ENCODE measurements at regions of chr5 and their contacts with region 1.

Region 1: GRCh38 chr5:97355775-97356174 is 172.7 kb upstream of the RIOK2 start:
- DNase-seq: peak; percentile 74
- ATAC-seq: peak; percentile 90
- H3K4me3 ChIP-seq: peak overlapping the region; percentile 68
- H3K27ac ChIP-seq: peak overlapping the region; percentile 68
- H3K4me1 ChIP-seq: peaks cover 11% of the 10 kb centered on the region
- H3K27me3 ChIP-seq: no peaks in the 10 kb centered on the region
- CTCF ChIP-seq: no peak
- EP300 ChIP-seq: 0 out of 4 replicates have a peak, but pooled peaks of 1 of the 2 experiments have one; percentile 4
- POLR2A ChIP-seq: 0 out of 2 replicates have a peak, but pooled peaks have one; percentile 32
- RAD21 ChIP-seq: no peak

Region 2: DNA sequence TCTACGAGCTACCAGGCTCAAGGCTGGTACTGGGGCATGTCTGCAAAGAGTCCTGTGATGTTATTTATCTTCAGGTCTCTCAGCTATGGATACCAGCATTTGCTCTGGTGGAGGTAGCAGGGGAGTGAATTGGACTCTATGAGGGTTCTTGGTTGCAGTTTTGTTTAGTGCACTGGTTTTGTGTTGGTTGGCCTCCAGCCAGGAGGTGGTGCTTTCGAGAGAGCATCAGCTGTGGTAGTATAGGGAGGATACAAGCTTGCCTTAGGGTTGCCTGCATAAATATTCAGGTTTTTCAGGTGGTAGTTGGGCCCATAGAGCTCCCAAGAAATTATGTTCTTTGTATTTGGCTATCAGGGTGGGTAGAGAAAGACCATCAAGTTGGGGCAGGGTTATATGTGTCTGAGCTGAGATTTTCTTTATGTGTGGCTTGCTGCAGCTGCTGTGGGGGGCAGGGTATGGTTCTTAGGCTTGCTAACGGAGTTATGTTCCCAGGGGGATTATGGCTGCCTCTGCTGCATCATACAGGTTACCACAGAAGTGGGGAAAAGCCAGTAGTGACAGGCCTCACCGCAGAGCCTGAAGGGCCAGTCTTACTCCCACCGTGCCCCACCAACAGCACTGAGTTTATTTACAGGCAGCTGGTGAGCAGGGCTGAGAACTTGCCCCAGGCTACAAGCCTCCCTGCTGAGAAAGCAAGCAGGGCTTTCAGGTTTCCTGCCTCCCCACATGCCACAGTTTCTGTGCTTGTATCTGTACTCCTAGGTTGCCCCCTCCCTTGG is 163.0 kb before region 1 on chr5:
- CTCF ChIA-PET with region 1: interaction called, 3 read pairs
- POLR2A ChIA-PET with region 1: no interaction called
- RAD21 ChIA-PET with region 1: no interaction called
- SMC1A ChIA-PET with region 1: no interaction called
- in situ Hi-C with region 1: no loop called
- intact Hi-C with region 1: loop called (anchors 5 kb)
- DNase-seq: peak; percentile 63
- ATAC-seq: peak; percentile 94
- H3K4me3 ChIP-seq: 0 out of 2 replicates have a peak overlapping the region, but pooled peaks have one; percentile 32
- H3K27ac ChIP-seq: peak overlapping the region; percentile 73
- H3K4me1 ChIP-seq: peaks cover 8% of the 10 kb centered on the region
- H3K27me3 ChIP-seq: no peaks in the 10 kb centered on the region
- CTCF ChIP-seq: no peak
- EP300 ChIP-seq: peak; percentile 28 to 49; a peak in 1 of 4 replicates
- POLR2A ChIP-seq: no peak
- RAD21 ChIP-seq: no peak

Region 3: GRCh38 chr5:97547999-97548738 is 192.4 kb after region 1 on chr5:
- CTCF ChIA-PET with region 1: no interaction called
- POLR2A ChIA-PET with region 1: no interaction called
- RAD21 ChIA-PET with region 1: no interaction called
- SMC1A ChIA-PET with region 1: interaction called, 3 read pairs
- in situ Hi-C with region 1: no loop called
- intact Hi-C with region 1: loop called (anchors 5 kb)
- DNase-seq: peak; percentile 42
- ATAC-seq: peak; percentile 85
- H3K4me3 ChIP-seq: no peak overlapping the region
- H3K27ac ChIP-seq: peak overlapping the region; percentile 45; the same call in 1 of the 2 replicates
- H3K4me1 ChIP-seq: peaks cover 11% of the 10 kb centered on the region
- H3K27me3 ChIP-seq: no peaks in the 10 kb centered on the region
- CTCF ChIP-seq: no peak
- EP300 ChIP-seq: peak; percentile 23 to 68; a peak in 2 of 4 replicates
- POLR2A ChIP-seq: no peak
- RAD21 ChIP-seq: no peak

Region 4: DNA sequence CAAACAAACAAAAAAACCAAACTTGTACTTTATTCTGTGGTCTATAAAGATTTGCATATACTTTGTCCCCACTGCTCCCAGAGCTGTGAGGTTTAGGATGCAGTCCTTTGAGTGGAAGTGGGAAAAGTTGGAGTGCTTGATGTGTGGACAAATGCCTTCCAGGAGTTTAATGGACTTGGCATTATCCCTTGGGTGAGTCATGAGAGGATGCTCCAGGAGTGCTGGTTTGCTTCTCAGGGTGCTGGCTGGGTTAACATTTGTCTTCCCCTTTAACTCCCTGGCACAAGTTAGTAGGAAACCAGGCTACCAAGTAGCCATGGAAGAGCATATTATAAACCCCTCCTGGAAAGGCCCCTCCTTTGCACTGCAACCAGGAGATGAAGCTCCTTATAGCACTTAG is 244.7 kb after region 1 on chr5:
- CTCF ChIA-PET with region 1: no interaction called
- POLR2A ChIA-PET with region 1: no interaction called
- RAD21 ChIA-PET with region 1: no interaction called
- SMC1A ChIA-PET with region 1: no interaction called
- in situ Hi-C with region 1: no loop called
- intact Hi-C with region 1: no loop called
- DNase-seq: no peak
- ATAC-seq: no peak
- H3K4me3 ChIP-seq: no peak overlapping the region
- H3K27ac ChIP-seq: no peak overlapping the region
- H3K4me1 ChIP-seq: no peaks in the 10 kb centered on the region
- H3K27me3 ChIP-seq: no peaks in the 10 kb centered on the region
- CTCF ChIP-seq: no peak
- EP300 ChIP-seq: no peak
- POLR2A ChIP-seq: no peak
- RAD21 ChIP-seq: no peak

Region 5: DNA sequence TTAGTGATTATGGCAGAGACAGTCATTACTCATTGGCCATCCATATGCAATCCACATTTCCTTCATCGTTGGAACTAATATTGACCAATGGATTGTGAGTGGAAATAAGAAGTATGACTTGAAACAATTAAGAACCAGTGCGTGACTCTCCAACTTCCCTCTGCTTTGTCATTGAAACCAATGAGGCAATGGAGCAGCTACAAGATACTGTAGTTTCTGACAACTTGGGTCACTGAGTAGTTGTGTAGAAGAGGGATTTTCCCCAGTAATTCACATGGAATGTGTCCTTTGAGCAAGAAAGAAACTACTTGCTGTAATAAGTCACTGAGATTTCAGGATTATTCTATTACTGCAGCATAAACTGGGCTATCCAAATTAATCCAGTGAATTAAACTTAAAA is 612.6 kb after region 1 on chr5:
- CTCF ChIA-PET with region 1: no interaction called
- POLR2A ChIA-PET with region 1: no interaction called
- RAD21 ChIA-PET with region 1: no interaction called
- SMC1A ChIA-PET with region 1: no interaction called
- in situ Hi-C with region 1: no loop called
- intact Hi-C with region 1: no loop called
- DNase-seq: no peak
- ATAC-seq: no peak
- H3K4me3 ChIP-seq: no peak overlapping the region
- H3K27ac ChIP-seq: no peak overlapping the region
- H3K4me1 ChIP-seq: no peaks in the 10 kb centered on the region
- H3K27me3 ChIP-seq: no peaks in the 10 kb centered on the region
- CTCF ChIP-seq: no peak
- EP300 ChIP-seq: no peak
- POLR2A ChIP-seq: no peak
- RAD21 ChIP-seq: no peak

Measured in GM12878 (cell line).